ENCODE measurements at regions of chr1 and their contacts with region 1.

Region 1: DNA sequence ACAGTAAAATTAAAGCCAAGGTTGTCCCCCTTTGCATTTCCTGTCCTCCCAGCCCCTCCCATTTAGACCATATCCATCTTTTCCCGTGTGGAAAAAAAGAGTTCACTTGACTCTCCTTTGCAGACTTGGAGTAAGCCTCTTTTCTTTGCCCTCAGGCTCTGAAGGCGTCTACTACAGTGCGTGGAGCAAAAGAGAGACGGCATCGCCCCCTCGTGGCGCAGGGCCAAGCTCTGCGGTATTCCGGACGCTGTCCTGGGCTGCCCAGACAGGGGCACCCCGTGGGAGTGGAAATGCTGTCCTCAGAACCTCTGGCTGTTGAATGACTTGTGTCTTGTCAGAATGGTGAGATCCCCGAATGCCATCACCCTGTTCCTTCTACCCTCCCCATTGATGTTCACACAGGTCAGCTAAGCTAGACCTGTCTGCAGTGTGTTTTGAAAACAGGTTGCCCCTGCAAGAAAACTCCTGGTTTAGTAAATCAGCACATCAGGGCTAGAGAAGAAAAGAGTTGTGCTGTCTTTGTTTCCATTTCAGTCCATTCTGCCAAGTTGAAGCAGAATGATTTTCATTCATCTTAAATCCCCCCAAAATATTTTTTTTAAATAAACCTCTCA is 12.3 kb upstream of the GJA8 start:
- DNase-seq: no peak
- ATAC-seq: peak; percentile 98
- H3K4me3 ChIP-seq: no peak overlapping the region
- H3K27ac ChIP-seq: no peak overlapping the region
- H3K4me1 ChIP-seq: no peaks in the 10 kb centered on the region
- H3K27me3 ChIP-seq: no peaks in the 10 kb centered on the region
- CTCF ChIP-seq: peak; percentile 74 to 77 (median 75)
- EP300 ChIP-seq: no peak
- POLR2A ChIP-seq: no peak
- RAD21 ChIP-seq: peak; percentile 78

Region 2: GRCh38 chr1:147494998-147495580 is 395.2 kb before region 1 on chr1:
- CTCF ChIA-PET with region 1: interaction called, 7 read pairs
- POLR2A ChIA-PET with region 1: no interaction called
- RAD21 ChIA-PET with region 1: interaction called, 5 read pairs
- SMC1A ChIA-PET with region 1: interaction called, 6 read pairs
- in situ Hi-C with region 1: loop called (anchors 5 kb)
- intact Hi-C with region 1: loop called (anchors 1 kb)
- DNase-seq: peak; percentile 13
- ATAC-seq: peak; percentile 99
- H3K4me3 ChIP-seq: no peak overlapping the region
- H3K27ac ChIP-seq: no peak overlapping the region
- H3K4me1 ChIP-seq: no peaks in the 10 kb centered on the region
- H3K27me3 ChIP-seq: no peaks in the 10 kb centered on the region
- CTCF ChIP-seq: peak; percentile 90 to 94 (median 93)
- EP300 ChIP-seq: no peak
- POLR2A ChIP-seq: no peak
- RAD21 ChIP-seq: peak; percentile 92

Region 3: DNA sequence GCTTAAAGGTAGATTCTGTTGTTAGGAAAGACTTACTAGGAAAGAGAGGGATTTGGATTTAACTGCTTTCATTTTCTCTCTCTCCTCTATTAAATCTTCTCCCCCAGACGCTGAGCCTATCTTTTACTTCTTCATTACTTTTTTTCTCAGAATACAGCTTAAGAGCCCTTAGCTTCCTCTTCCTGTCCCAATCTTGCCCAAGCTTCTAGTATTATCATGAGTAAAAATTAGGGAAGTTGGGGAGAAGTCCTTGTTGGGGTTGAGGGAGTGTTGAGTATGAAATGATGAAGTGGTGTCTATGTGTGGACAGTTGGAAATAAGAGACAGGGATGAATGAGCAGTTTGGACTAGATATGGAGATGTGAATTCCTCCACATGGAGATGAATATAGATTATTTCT is 254.9 kb before region 1 on chr1:
- CTCF ChIA-PET with region 1: interaction called, 16 read pairs
- POLR2A ChIA-PET with region 1: no interaction called
- RAD21 ChIA-PET with region 1: interaction called, 5 read pairs
- SMC1A ChIA-PET with region 1: interaction called, 8 read pairs
- in situ Hi-C with region 1: loop called (anchors 5 kb)
- intact Hi-C with region 1: loop called (anchors 2 kb)
- DNase-seq: no peak
- ATAC-seq: no peak
- H3K4me3 ChIP-seq: no peak overlapping the region
- H3K27ac ChIP-seq: no peak overlapping the region
- H3K4me1 ChIP-seq: no peaks in the 10 kb centered on the region
- H3K27me3 ChIP-seq: no peaks in the 10 kb centered on the region
- CTCF ChIP-seq: no peak
- EP300 ChIP-seq: no peak
- POLR2A ChIP-seq: no peak
- RAD21 ChIP-seq: no peak

Region 4: DNA sequence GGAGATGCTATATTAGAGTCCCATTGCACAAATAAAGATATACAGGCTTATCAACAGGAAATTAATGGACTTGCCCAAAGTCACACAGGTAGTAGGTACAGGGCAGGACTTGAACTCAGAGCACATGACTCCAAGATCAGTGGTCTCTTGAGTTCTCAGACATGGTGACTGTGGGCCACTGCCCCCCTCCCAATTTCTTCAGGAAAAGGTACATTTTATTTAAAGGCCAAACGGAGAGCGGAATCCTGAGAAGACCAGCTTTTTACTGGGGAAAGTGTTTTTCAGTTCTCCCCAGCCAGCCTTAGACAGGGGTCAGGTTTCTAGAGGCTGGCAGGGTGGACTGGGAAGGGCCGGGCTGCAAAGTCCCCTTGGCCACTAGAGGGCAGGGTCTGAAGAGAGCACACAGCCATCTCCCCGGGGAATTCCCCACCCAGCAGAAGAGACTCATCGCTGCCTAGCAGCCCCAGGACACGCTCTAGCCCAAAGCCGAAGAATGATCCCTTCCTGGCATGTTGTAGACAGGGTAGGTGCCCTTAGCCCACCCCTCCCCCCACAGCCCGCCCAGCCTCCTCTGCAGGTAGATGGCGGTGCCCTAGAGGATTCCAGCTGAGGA is 249.6 kb before region 1 on chr1:
- CTCF ChIA-PET with region 1: interaction called, 16 read pairs
- POLR2A ChIA-PET with region 1: interaction called, 4 read pairs
- RAD21 ChIA-PET with region 1: interaction called, 6 read pairs
- SMC1A ChIA-PET with region 1: interaction called, 8 read pairs
- in situ Hi-C with region 1: loop called (anchors 5 kb)
- intact Hi-C with region 1: loop called (anchors 2 kb)
- DNase-seq: no peak
- ATAC-seq: peak; percentile 100
- H3K4me3 ChIP-seq: no peak overlapping the region
- H3K27ac ChIP-seq: no peak overlapping the region
- H3K4me1 ChIP-seq: no peaks in the 10 kb centered on the region
- H3K27me3 ChIP-seq: no peaks in the 10 kb centered on the region
- CTCF ChIP-seq: peak; percentile 92 to 98 (median 92)
- EP300 ChIP-seq: no peak
- POLR2A ChIP-seq: no peak
- RAD21 ChIP-seq: peak; percentile 57

Region 5: DNA sequence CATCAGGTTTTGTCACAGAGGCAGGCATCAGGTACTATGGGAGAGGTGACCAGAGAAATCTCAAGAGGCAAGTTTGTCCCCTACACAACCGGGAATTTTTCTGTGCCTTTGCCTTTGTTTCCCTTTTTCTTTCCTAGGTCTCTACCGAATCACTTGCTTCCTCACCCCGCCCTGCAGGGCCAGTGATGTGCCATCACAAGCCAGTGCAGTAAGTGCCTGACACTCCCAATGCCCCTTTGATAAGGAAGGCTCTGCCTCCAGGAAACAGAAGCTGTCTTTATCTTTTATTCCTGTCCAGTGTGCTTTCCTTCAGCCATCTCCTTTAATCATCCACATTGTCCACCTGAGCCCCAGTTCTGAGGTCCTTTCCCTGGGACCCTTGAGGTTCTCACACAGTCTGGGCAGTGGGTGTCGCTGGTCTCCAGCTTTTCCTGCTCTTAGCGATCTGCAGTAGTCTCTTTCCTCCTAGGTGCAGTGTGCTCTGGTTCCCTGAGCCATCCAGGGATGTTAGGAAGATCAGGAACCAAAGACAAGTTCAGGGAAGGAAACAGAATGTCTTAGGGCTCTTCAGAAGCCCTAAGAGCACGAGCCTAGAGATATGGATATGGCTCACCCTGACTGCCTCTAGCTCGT is 166.5 kb before region 1 on chr1:
- CTCF ChIA-PET with region 1: interaction called, 3 read pairs
- POLR2A ChIA-PET with region 1: no interaction called
- RAD21 ChIA-PET with region 1: no interaction called
- SMC1A ChIA-PET with region 1: no interaction called
- in situ Hi-C with region 1: no loop called
- intact Hi-C with region 1: loop called (anchors 10 kb)
- DNase-seq: no peak
- ATAC-seq: no peak
- H3K4me3 ChIP-seq: no peak overlapping the region
- H3K27ac ChIP-seq: no peak overlapping the region
- H3K4me1 ChIP-seq: no peaks in the 10 kb centered on the region
- H3K27me3 ChIP-seq: no peaks in the 10 kb centered on the region; a peak in 2 of 4 replicates
- CTCF ChIP-seq: peak; percentile 13 to 29 (median 16); a peak in 2 of 6 replicates
- EP300 ChIP-seq: no peak
- POLR2A ChIP-seq: no peak
- RAD21 ChIP-seq: peak; percentile 42; the same call in 1 of the 2 replicates

Region 6: DNA sequence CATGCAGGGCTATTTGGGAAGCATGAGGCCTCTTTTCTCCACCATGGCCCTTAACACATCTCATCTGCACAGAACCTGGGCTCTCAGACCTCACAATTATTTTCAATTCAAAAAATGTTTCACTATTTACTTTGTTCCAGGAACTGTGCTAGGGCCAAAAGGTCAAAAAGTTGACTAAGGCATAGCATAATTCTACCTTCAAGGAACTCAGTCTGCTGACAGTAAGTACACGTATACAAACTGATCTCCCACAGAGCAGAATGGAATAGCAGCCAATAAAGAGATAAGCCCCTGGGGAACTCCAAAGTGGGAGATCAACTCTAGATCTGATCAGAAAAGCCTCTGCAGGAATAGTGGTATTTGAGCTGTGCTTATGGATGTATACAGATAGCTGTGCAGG is 21.3 kb before region 1 on chr1:
- CTCF ChIA-PET with region 1: no interaction called
- POLR2A ChIA-PET with region 1: no interaction called
- RAD21 ChIA-PET with region 1: no interaction called
- SMC1A ChIA-PET with region 1: no interaction called
- in situ Hi-C with region 1: no loop called
- intact Hi-C with region 1: no loop called
- DNase-seq: no peak
- ATAC-seq: no peak
- H3K4me3 ChIP-seq: no peak overlapping the region
- H3K27ac ChIP-seq: no peak overlapping the region
- H3K4me1 ChIP-seq: no peaks in the 10 kb centered on the region
- H3K27me3 ChIP-seq: no peaks in the 10 kb centered on the region
- CTCF ChIP-seq: no peak
- EP300 ChIP-seq: no peak
- POLR2A ChIP-seq: no peak
- RAD21 ChIP-seq: no peak

Region 7: DNA sequence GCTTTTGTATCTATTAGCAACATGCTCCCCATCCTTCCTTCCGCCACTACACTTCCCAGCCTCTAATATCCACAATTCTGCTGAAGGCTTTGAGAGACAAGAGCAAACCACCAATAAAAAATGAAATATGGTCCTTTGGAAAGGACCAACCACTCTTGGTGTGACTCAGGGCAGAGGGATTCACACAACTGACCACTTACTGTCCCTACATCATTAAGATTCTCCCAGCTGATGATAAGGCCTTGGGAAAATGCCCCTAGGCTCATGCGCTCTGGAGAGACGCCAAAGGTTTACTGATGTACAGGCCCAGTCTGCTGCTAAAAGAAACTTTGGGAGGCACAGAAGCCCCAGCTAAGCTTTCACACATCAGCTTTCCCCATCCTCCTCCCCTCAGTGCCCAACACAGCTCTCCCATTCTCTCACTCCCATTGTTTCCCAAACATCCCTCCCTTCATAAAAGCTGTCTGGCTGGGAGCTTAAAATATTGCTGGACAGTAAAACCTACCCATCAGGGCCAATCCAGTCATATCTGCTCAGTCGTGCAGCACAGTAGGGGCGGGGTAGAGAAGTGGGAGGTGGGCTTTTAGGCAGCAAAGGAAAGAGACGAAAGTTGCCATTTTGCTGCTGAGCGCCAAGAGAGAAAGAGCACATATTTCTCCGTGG is 12.0 kb after region 1 on chr1 and contains the start of gene GJA8:
- CTCF ChIA-PET with region 1: interaction called, 52 read pairs
- POLR2A ChIA-PET with region 1: no interaction called
- RAD21 ChIA-PET with region 1: interaction called, 4 read pairs
- SMC1A ChIA-PET with region 1: interaction called, 3 read pairs
- in situ Hi-C with region 1: no loop called
- intact Hi-C with region 1: no loop called
- DNase-seq: no peak
- ATAC-seq: no peak
- H3K4me3 ChIP-seq: no peak within 1 kb of the TSS
- H3K27ac ChIP-seq: no peak within 1 kb of the TSS
- H3K4me1 ChIP-seq: no peaks in the 10 kb centered on the region
- H3K27me3 ChIP-seq: no peaks in the 10 kb centered on the region
- CTCF ChIP-seq: no peak
- EP300 ChIP-seq: no peak
- POLR2A ChIP-seq: no peak
- RAD21 ChIP-seq: no peak
- polyA plus RNA-seq, gene GJA8: not detected